ENCODE measurements at regions of chr22 and their contacts with region 1.

Region 1: GRCh38 chr22:42437488-42438292 is 5.5 kb upstream of the NFAM1 start:
- DNase-seq: peak; percentile 88
- ATAC-seq: peak; percentile 87

Region 2: DNA sequence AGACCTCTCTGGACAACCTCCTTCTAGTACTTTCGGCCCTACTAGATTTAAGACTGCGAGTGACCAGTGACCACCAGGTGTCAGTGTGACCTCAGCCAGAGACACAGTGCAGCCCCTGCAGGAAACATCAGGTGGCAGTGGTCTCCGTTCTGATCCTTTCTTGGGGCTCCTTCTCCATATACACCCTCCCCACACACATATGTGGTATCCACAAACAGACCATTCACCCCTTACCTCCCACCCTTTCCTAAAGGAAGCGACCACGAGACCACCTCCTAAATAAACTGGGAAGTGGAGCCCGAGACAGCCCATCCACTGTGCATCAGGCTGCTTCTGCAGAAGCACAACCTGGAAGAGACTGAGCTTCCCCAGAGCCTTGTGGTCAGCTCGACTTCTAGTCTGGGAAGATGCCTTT is 268.6 kb before region 1 on chr22:
- intact Hi-C with region 1: loop called (anchors 1 kb)
- DNase-seq: no peak
- ATAC-seq: peak; percentile 76

Measured in Right ventricle myocardium inferior (tissue), 1 donor.